ENCODE measurements at regions of chr6 and their contacts with region 1.

Region 1: DNA sequence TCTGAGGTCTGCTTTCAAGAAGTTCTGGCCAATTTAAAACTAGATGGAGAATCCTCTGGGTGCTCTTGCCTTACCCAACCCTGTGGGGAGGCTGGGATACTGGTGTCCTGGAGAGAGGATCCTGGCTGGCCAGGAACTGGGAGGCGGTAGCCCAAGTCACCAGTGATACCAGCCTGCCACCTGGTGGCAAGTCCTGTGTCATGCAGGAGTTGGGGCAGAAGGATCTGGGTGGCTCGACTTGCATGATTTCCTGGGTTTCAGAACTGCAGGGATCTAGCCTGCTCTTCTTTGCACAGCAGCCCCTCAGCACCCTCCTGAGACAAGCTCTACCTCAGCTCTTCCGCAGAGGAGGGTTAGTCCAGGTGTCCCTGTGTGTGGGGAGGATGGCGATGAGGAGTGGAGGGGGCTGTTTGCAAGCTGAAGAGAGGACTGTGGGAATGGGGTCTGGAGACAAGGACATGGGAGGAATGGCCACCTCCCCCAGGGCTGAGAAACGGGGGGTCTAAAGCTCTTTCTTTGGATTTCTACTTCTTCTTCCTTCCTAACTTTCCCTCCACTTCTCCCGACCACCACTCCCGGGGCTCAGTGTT is 4.2 kb downstream of the KCNK17 start:
- DNase-seq: peak; percentile 63
- H3K4me3 ChIP-seq: no peak overlapping the region
- H3K27ac ChIP-seq: no peak overlapping the region
- H3K4me1 ChIP-seq: no peaks in the 10 kb centered on the region
- CTCF ChIP-seq: peak; percentile 92

Region 2: GRCh38 chr6:38997128-38997761 is 312.8 kb before region 1 on chr6:
- CTCF ChIA-PET with region 1: no interaction called
- POLR2A ChIA-PET with region 1: no interaction called
- intact Hi-C with region 1: loop called (anchors 10 kb)
- DNase-seq: peak; percentile 26
- H3K4me3 ChIP-seq: no peak overlapping the region
- H3K27ac ChIP-seq: no peak overlapping the region
- H3K4me1 ChIP-seq: no peaks in the 10 kb centered on the region
- CTCF ChIP-seq: peak; percentile 78

Region 3: GRCh38 chr6:39166189-39166911 is 143.7 kb before region 1 on chr6:
- CTCF ChIA-PET with region 1: interaction called, 4 read pairs
- POLR2A ChIA-PET with region 1: no interaction called
- intact Hi-C with region 1: loop called (anchors 1 kb)
- DNase-seq: peak; percentile 73
- H3K4me3 ChIP-seq: no peak overlapping the region
- H3K27ac ChIP-seq: no peak overlapping the region
- H3K4me1 ChIP-seq: no peaks in the 10 kb centered on the region
- CTCF ChIP-seq: peak; percentile 85

Region 4: DNA sequence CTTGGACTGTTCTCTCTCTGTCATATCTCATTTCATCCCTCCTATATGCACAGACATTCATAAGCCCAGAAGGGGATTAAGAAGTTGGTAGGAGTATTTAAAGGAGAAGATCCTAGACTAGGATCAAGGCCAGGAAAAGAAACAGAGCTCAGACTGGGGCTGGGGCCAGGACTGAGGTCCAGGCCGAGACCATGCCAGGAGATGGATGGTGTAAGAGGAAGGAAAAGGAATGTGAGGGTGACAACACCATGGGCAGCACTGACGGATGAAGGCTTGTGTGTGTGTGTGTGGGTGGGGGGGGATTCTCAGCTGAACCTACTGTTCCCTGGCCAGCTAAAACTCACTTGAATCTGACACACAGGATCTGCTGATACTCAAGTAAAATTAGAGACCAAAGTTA is 233.1 kb after region 1 on chr6:
- CTCF ChIA-PET with region 1: no interaction called
- POLR2A ChIA-PET with region 1: no interaction called
- intact Hi-C with region 1: no loop called
- DNase-seq: no peak
- H3K4me3 ChIP-seq: no peak overlapping the region
- H3K27ac ChIP-seq: no peak overlapping the region
- H3K4me1 ChIP-seq: no peaks in the 10 kb centered on the region
- CTCF ChIP-seq: no peak

Measured in OCI-LY7 (cell line).